PC-3 (cell line): ENCODE measurements at regions of chrX and their contacts with region 1.

Region 1: DNA sequence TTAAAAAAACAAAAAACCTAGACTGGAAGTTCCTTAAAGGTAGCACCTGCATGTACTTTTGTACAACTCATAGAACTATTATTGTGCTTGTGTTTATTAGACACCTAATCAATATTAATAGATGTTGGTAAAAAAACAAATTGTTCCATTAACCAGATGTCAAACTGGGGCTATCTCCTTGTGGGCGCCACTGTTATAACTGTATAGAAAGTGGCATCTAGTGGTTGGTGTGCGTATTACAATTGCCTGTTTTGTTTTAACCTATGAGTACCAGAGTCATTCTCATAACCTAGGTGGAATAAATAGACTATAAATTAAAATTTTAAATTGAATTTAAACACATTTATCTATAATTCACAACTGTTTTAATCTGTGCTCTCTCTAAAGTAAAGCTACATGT is 97.4 kb downstream of the COL4A5 start:
- DNase-seq: peak; percentile 73
- ATAC-seq: peak; percentile 67
- H3K4me3 ChIP-seq: no peak overlapping the region
- H3K27ac ChIP-seq: no peak overlapping the region
- H3K4me1 ChIP-seq: peaks cover 11% of the 10 kb centered on the region; the same call in 1 of the 2 replicates
- H3K27me3 ChIP-seq: no peaks in the 10 kb centered on the region
- CTCF ChIP-seq: peak; percentile 77

Region 2: DNA sequence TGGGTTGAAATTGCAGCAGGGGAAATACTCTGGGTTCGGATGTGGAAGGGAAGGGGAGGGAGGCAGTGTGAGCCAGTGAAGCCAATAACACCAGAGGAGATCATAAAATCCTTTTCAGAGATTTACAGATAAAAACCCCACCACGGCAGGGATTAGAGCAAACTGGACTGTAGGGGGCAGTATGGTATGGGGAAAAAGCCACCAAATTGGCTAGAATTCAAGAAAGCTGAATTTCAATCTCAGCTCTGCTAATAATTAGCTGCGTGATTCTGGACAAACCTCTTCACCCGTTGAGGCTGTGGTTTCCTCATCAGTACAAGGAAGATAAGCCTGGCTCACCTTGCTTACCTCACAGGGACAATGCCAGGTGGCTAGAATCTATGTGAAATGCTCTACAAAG is 337.3 kb before region 1 on chrX:
- CTCF ChIA-PET with region 1: no interaction called
- POLR2A ChIA-PET with region 1: no interaction called
- intact Hi-C with region 1: loop called (anchors 2 kb)
- DNase-seq: peak; percentile 77
- ATAC-seq: peak; percentile 72
- H3K4me3 ChIP-seq: no peak overlapping the region
- H3K27ac ChIP-seq: no peak overlapping the region
- H3K4me1 ChIP-seq: peaks cover 13% of the 10 kb centered on the region
- H3K27me3 ChIP-seq: no peaks in the 10 kb centered on the region
- CTCF ChIP-seq: peak; percentile 84

Region 3: DNA sequence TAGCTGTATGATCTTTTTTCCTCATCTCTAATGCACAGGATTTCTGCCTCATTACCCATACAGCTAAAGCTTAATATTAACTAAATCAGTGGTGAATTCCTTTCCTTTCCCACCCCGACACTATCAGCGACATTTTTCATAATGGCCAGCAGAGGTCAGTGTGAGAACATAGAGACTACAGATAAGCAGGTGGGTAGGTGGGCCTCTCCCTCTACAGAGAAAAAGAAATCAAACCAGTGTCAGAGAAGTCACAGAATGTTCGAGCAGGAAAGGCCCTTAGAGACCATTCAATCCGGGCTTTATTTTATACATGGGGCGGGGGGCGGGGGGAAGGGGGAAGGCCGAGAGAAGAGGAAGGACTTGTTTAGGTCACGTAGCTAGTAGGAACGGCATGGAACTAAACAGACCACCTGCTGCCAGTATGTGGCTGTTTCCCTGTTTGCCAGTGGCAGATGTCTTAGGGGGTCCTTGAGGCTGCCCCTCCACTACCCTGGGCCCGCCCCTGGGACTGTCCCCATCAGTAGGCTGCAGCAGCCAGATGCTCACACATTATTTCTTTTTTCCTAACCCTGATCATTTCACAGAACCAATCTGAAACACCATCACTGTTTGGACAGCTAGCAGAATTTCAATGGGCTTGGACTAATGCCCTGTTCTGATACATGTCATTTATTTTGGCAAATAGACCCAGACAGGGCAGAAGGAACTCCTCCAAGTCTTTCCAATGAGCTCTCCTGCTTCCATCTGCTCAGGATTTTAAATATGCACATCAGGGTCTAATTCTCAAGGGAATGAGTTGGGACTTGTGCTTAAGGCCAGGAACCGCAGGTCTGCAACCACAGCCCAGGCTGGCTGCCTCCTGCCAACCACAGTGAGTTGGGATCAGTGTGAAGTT is 312.0 kb before region 1 on chrX:
- CTCF ChIA-PET with region 1: interaction called, 4 read pairs
- POLR2A ChIA-PET with region 1: no interaction called
- intact Hi-C with region 1: loop called (anchors 1 kb)
- DNase-seq: peak; percentile 65
- ATAC-seq: peak; percentile 64
- H3K4me3 ChIP-seq: no peak overlapping the region
- H3K27ac ChIP-seq: no peak overlapping the region
- H3K4me1 ChIP-seq: peaks cover 4% of the 10 kb centered on the region; the same call in 1 of the 2 replicates
- H3K27me3 ChIP-seq: no peaks in the 10 kb centered on the region
- CTCF ChIP-seq: peak; percentile 75

Region 4: GRCh38 chrX:108312938-108313337 is 224.1 kb before region 1 on chrX:
- CTCF ChIA-PET with region 1: interaction called, 3 read pairs
- POLR2A ChIA-PET with region 1: no interaction called
- intact Hi-C with region 1: loop called (anchors 2 kb)
- DNase-seq: peak; percentile 94
- ATAC-seq: peak; percentile 80
- H3K4me3 ChIP-seq: no peak overlapping the region
- H3K27ac ChIP-seq: peak overlapping the region; percentile 98
- H3K4me1 ChIP-seq: peaks cover 65% of the 10 kb centered on the region
- H3K27me3 ChIP-seq: no peaks in the 10 kb centered on the region
- CTCF ChIP-seq: no peak

Region 5: GRCh38 chrX:108439434-108439883 is 97.5 kb before region 1 on chrX and contains the start of gene COL4A5:
- CTCF ChIA-PET with region 1: no interaction called
- POLR2A ChIA-PET with region 1: no interaction called
- intact Hi-C with region 1: loop called (anchors 5 kb)
- DNase-seq: peak; percentile 90
- ATAC-seq: peak; percentile 79
- H3K4me3 ChIP-seq: peak within 1 kb of the TSS; percentile 87
- H3K27ac ChIP-seq: peak within 1 kb of the TSS; percentile 65
- H3K4me1 ChIP-seq: peaks cover 23% of the 10 kb centered on the region
- H3K27me3 ChIP-seq: no peaks in the 10 kb centered on the region
- CTCF ChIP-seq: no peak
- total RNA-seq, gene COL4A5: 30.0 and 63.8 TPM in 2 replicates

Region 6: DNA sequence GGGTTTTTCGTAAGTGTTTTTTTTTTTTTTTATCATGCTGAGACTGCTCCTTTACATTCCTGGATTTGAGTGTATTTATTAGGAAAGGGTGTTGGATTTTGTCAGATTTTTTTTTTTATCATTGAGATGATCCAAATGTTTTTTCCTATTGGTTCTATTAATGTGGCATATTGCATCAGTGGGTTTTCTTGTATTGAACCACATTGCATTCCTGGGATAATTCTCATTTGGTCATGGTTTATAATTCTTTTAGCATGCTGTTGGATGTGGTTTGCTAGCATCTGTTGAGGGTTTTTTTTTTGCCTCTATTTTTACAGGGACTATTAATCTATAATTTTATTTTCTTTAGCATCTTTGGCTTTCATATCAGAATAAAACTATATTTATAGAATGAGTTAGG is 68.5 kb before region 1 on chrX:
- CTCF ChIA-PET with region 1: no interaction called
- POLR2A ChIA-PET with region 1: no interaction called
- intact Hi-C with region 1: no loop called
- DNase-seq: no peak
- ATAC-seq: no peak
- H3K4me3 ChIP-seq: no peak overlapping the region
- H3K27ac ChIP-seq: no peak overlapping the region
- H3K4me1 ChIP-seq: no peaks in the 10 kb centered on the region
- H3K27me3 ChIP-seq: no peaks in the 10 kb centered on the region
- CTCF ChIP-seq: no peak